Heart left ventricle (tissue), 16 donors: ENCODE measurements at regions of chr5 and their contacts with region 1.

Region 1: DNA sequence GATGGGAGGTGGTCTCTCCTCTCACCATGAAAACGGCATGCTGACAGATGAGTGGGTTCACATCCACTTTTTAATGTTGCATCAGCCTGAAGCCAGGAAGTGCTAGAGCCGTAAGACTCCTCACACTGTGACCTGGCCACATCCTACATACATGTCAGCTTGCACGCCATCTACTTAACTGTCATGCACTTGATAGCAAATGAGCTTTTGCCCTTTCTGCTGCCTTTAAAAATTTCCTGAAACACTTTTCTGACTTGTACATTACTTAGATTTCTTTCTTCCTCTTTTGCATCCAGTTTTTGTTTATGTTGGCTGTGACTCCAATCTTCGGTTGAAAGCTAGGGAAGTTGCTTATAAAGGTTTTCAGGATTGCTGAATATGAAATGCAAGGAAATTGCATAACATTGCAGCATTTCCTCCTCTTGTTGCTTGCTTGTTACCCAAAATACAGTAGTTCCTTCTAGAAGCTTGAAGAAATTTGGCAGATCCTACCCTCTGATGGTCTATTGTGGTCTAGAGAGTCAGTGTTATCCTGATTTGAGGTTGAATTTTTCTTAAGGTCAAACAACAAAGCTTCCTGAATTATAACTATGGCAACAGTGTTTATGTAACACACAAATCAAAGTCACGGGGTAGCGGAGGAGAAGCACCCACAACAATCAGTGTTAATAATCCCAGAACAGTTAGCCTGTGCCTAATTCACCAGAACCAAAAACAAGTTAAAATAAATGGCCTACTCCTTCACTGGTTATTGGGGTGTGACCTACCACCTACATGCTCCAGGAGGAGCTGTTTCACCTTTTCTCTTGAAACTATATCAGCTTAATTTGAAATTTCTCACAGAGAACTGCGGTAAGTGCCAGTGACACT is 232.5 kb downstream of the ARHGAP26 start:
- DNase-seq: peak in 1 of 5 donors; percentile 41
- ATAC-seq: peak; percentile 66 to 87 (median 82)
- H3K4me3 ChIP-seq: peak overlapping the region in 2 of 12 donors; percentile 6 to 8
- H3K27ac ChIP-seq: peak overlapping the region; percentile 14 to 89 (median 74)
- H3K4me1 ChIP-seq: peaks cover 7 to 81% (median 55%) of the 10 kb centered on the region in 12 donors
- H3K27me3 ChIP-seq: no peaks in the 10 kb centered on the region
- CTCF ChIP-seq: peak; percentile 26 to 67 (median 50)
- POLR2A ChIP-seq: no peak

Region 2: DNA sequence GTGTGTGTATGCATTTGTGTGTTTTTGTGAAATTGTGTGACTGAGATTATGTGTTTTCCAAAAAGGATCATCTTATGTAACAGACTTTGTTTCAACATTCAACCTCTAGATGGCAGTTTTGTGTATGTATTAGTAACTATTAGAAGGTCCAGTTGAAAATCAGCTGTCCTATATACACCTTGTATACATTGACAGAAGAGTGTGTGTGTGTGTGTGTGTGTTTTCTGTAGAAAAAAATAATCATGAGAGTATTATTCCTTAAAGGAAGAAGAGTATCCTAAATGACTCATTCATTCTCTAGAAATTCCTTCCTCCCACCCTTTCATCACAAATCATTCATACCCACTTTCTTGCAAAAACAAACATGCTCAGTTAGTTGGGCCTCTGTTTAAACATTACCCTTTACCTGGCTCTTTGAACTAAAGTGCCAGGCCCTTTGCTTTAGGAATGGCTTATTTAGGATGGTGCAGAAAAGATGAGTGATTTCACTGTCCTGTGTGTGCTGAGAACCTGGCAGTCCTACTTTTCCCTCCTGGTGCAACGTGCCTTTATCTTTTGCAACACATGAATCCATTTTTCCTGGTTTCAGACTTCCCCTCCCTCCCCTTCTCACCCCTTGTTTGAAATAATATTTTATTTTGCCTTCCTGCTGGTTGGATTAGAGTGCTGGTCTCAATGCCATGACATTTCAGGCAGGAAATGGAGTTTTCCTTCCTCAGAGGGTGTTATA is 80.3 kb before region 1 on chr5:
- intact Hi-C with region 1: loop called in 3 of 10 experiments (anchors 2 to 10 kb)
- DNase-seq: no peak
- ATAC-seq: peak in 2 of 4 donors; percentile 44 to 53
- H3K4me3 ChIP-seq: no peak overlapping the region
- H3K27ac ChIP-seq: peak overlapping the region in 8 of 12 donors; percentile 21 to 63 (median 44)
- H3K4me1 ChIP-seq: peaks cover 4 to 57% (median 43%) of the 10 kb centered on the region in 12 donors
- H3K27me3 ChIP-seq: no peaks in the 10 kb centered on the region
- CTCF ChIP-seq: peak; percentile 27 to 72 (median 52)
- POLR2A ChIP-seq: no peak

Region 3: GRCh38 chr5:143066556-143067281 is 64.0 kb after region 1 on chr5:
- intact Hi-C with region 1: loop called in 1 of 10 experiments (anchors 10 kb)
- DNase-seq: peak in 2 of 5 donors; percentile 43
- ATAC-seq: peak in 1 of 4 donors; percentile 23
- H3K4me3 ChIP-seq: no peak overlapping the region
- H3K27ac ChIP-seq: peak overlapping the region in 8 of 12 donors; percentile 1 to 81 (median 34)
- H3K4me1 ChIP-seq: peaks cover 5 to 60% (median 51%) of the 10 kb centered on the region in 12 donors
- H3K27me3 ChIP-seq: no peaks in the 10 kb centered on the region
- CTCF ChIP-seq: no peak
- POLR2A ChIP-seq: no peak

Region 4: DNA sequence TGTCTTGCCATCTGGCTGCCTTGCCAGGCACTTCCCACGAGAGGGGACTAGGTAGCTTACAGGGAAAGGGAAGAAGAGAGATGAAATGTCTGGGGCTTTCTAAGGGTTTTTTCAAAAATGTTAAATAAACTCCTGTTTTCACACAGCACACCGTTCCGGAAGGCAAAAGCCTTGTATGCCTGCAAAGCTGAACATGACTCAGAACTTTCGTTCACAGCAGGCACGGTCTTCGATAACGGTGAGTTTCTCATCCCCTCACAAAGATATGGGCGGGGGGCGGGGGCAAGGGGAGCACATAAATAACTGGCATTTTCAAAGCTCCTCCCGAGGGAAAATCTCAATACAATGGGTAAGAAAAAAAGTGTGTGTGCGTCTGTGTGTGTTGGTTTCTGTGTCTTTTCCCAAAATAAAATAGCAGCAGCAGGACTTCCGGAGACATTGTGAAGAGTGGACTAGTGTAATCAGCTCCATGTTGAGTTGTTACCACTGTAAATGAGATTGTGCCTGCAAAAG is 211.2 kb after region 1 on chr5:
- intact Hi-C with region 1: loop called in 3 of 10 experiments (anchors 5 to 10 kb)
- DNase-seq: no peak
- ATAC-seq: peak in 2 of 4 donors; percentile 26 to 62
- H3K4me3 ChIP-seq: no peak overlapping the region
- H3K27ac ChIP-seq: peak overlapping the region in 10 of 12 donors; percentile 32 to 79 (median 63)
- H3K4me1 ChIP-seq: peaks cover 0 to 64% (median 27%) of the 10 kb centered on the region in 12 donors
- H3K27me3 ChIP-seq: no peaks in the 10 kb centered on the region
- CTCF ChIP-seq: no peak
- POLR2A ChIP-seq: no peak

Region 5: DNA sequence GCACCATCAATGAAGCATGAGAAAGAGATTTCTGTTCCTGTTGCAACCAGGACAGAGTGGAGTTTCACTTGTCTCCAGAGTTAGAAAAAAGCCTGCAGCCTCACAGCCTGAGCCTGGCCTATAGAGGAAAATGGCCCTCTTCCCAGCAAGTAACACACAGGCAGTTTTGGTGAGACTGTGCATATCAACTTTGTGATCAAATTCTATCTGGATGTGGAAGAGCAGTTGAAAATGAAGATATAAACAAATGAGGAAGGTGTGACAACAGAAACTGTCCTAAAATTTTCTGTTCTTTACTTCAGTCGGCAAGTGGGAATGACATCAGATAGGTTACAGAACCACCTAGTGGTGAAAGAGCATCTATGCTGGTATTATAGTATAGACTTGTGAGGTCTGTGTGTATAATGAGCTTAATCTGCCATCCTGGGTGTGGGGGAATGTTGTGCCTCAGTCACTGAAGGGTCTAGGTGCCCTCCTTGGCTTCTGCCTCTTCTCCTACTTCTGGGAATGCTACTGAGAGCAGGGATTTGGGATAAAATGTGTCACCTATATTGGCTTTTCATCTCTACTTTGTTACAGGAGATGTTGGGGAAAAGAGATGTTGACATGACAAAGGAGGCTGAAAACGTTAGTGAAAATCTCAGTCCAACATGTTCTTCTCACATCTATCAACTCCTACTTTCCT is 1139.6 kb after region 1 on chr5:
- intact Hi-C with region 1: loop called in 1 of 10 experiments (anchors 10 kb)
- DNase-seq: no peak
- ATAC-seq: peak; percentile 51 to 77 (median 62)
- H3K4me3 ChIP-seq: no peak overlapping the region
- H3K27ac ChIP-seq: no peak overlapping the region
- H3K4me1 ChIP-seq: peaks cover 0 to 34% (median 11%) of the 10 kb centered on the region in 12 donors
- H3K27me3 ChIP-seq: no peaks in the 10 kb centered on the region
- CTCF ChIP-seq: peak; percentile 36 to 78 (median 64)
- POLR2A ChIP-seq: no peak